ENCODE measurements at regions of chr14 and their contacts with region 1.

Region 1: DNA sequence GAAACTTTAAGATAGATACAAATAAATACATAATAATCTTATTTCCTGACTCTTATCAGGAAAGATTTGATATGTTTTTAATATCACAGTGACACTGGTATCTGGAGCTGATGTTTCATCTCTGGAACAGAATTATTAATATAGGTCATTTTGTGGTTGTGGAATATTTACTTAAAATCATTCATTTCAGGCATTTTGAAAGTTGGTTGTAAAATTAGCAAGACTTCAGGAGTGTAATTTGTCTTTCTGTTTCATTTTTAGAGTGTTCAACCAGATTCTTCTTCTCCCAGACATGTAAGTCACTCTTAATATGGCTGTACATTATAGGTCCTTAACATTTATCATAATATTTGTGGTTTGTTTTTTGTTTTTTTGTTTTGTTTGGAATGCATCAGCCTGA is 115.7 kb downstream of the PCNX1 start:
- DNase-seq: no peak
- H3K4me3 ChIP-seq: no peak overlapping the region
- H3K27ac ChIP-seq: 0 out of 2 replicates have a peak overlapping the region, but pooled peaks have one; percentile 51
- H3K4me1 ChIP-seq: peaks cover 24% of the 10 kb centered on the region
- H3K27me3 ChIP-seq: no peaks in the 10 kb centered on the region
- CTCF ChIP-seq: no peak

Region 2: DNA sequence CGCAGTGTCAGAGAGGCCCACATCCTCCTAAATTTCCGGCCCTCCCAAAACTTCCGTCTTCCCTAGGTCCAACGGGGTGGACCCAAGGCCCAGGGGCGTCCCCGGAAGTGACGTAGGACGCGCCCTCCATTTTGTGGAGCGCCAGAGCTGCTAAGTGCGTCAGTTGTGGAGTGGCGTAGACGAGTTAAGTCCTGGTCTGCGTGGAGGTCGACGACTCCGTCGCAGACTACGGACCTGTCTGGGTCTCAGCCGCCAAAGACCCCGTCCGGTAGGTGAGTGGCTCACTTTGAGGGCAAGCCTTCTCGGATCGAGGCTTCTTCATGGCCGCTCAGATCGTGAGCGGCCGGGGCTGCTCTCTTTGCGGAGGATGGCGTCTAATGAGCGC is 1256.0 kb before region 1 on chr14 and contains the start of gene SRSF5:
- CTCF ChIA-PET with region 1: no interaction called
- POLR2A ChIA-PET with region 1: interaction called, 12 read pairs
- intact Hi-C with region 1: no loop called
- DNase-seq: peak; percentile 93 to 95
- H3K4me3 ChIP-seq: peak within 1 kb of the TSS; percentile 71
- H3K27ac ChIP-seq: peak within 1 kb of the TSS; percentile 97
- H3K4me1 ChIP-seq: peaks cover 23% of the 10 kb centered on the region
- H3K27me3 ChIP-seq: no peaks in the 10 kb centered on the region
- CTCF ChIP-seq: no peak
- total RNA-seq, gene SRSF5: 385 and 395 TPM in 2 replicates

Region 3: DNA sequence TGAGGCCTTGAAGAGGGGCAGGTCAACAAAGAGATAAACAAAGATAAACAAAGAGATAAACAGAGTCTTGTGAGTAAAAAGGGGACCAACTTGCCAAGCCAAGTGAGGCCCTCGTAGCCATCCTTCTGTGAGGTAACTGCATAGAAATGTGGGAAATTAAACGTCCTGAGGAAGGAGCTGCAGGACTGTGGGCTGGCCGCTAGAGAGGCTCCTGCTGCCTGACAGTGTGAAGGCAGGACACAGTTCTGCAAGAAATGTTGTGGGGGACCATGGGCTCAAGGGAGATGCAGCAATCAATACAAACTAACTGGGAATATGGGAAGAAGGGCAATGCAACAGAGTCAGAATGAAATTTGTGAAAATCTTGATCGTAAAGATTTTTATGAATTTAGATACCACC is 926.1 kb before region 1 on chr14:
- CTCF ChIA-PET with region 1: no interaction called
- POLR2A ChIA-PET with region 1: interaction called, 11 read pairs
- intact Hi-C with region 1: no loop called
- DNase-seq: no peak
- H3K4me3 ChIP-seq: no peak overlapping the region
- H3K27ac ChIP-seq: no peak overlapping the region
- H3K4me1 ChIP-seq: no peaks in the 10 kb centered on the region
- H3K27me3 ChIP-seq: peaks cover 83% of the 10 kb centered on the region
- CTCF ChIP-seq: peak; percentile 42; the same call in 1 of the 2 replicates

Measured in PC-9 (cell line).